CD4-positive, alpha-beta T cell (primary cell): ENCODE measurements at regions of chr2 and their contacts with region 1.

Region 1: GRCh38 chr2:26605195-26605998 is 35.8 kb downstream of the CIB4 start:
- DNase-seq: peak in 10 of 14 experiments; percentile 8 to 73 (median 24)
- ATAC-seq: no peak
- H3K4me3 ChIP-seq: no peak overlapping the region
- H3K4me3 Mint-ChIP-seq: no peak overlapping the region
- H3K27ac ChIP-seq: no peak overlapping the region
- H3K27ac Mint-ChIP-seq: no peak overlapping the region
- H3K4me1 ChIP-seq: peaks cover 17% of the 10 kb centered on the region
- H3K4me1 Mint-ChIP-seq: peaks cover 22% of the 10 kb centered on the region
- H3K27me3 ChIP-seq: peaks cover 3 to 18% of the 10 kb centered on the region in 2 experiments
- H3K27me3 Mint-ChIP-seq: peaks cover 26% of the 10 kb centered on the region
- CTCF ChIP-seq: peak; percentile 66

Region 2: DNA sequence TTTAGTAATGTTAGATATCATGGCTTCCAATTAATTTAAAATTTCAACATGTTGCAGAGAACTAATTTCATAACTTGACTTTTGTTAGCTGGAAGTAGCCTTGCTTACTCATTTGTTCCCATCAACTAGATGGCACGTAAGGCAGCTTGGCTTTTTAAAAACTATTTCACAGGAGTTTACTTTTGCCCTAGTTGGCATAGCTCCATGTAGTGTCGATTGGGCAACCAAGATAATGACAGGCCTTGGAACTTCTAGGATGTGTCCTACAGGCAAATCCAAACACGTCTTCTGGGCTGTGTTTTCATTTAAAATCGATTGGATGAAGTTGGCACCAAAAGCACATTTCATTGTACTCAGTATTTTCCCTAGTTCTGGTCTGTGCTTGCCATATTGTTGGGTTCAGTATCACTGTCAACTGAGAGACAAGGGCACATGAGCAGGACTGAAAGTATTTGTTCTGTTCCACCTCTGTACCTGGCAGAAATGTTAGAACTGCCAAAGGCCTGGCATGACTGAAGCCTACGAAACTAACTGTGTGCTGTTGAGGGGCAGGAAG is 331.3 kb before region 1 on chr2:
- CTCF ChIA-PET with region 1: no interaction called
- POLR2A ChIA-PET with region 1: no interaction called
- intact Hi-C with region 1: no loop called
- DNase-seq: peak in 2 of 14 experiments; percentile 39 to 41
- ATAC-seq: no peak
- H3K4me3 ChIP-seq: no peak overlapping the region
- H3K4me3 Mint-ChIP-seq: no peak overlapping the region
- H3K27ac ChIP-seq: no peak overlapping the region
- H3K27ac Mint-ChIP-seq: no peak overlapping the region
- H3K4me1 ChIP-seq: no peaks in the 10 kb centered on the region
- H3K4me1 Mint-ChIP-seq: no peaks in the 10 kb centered on the region
- H3K27me3 ChIP-seq: no peaks in the 10 kb centered on the region
- H3K27me3 Mint-ChIP-seq: no peaks in the 10 kb centered on the region
- CTCF ChIP-seq: no peak

Region 3: DNA sequence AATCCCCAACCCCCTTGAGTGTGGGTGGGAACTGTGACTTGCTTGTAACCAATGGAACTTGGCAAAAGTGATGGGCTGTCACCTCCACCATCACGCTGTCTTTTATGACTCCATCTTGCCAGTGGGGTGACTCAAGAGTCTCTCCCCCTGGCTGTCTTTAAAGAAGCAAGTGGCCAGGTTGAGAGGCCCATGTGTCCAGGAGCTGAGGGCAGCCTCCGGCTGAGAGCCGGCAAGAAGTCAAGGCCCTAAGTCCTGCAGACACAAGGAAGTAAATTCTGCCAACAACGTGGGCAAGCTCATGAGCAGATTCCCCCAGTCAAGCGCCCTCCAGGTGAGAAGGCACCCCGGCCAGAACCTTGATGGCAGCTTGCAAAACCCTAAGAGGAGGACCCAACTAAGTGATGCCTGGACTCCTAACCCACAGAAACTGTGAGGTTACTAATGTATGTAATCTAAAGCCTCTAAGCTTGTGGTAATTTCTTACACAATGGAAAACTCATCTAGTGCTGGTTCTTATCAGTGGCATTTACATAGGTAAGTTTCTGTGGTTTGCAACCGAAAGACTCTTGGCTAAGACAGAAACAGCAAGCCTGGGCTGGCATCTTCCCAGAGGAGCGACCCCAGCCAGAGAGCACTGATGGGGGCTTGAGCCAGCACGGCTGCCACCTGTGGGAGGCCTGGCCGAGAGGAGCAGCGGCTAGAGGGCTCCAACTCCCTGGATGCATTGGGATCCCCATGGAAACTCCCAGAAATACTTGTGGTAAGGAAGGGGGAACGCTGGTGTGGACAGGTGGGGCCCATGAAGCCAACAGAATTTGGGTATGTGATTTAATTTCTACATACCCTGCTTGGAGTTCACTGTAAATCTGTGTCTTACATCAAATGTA is 13.5 kb before region 1 on chr2:
- CTCF ChIA-PET with region 1: no interaction called
- POLR2A ChIA-PET with region 1: no interaction called
- intact Hi-C with region 1: no loop called
- DNase-seq: peak in 1 of 14 experiments; percentile 22
- ATAC-seq: no peak
- H3K4me3 ChIP-seq: no peak overlapping the region
- H3K4me3 Mint-ChIP-seq: no peak overlapping the region
- H3K27ac ChIP-seq: no peak overlapping the region
- H3K27ac Mint-ChIP-seq: no peak overlapping the region
- H3K4me1 ChIP-seq: no peaks in the 10 kb centered on the region
- H3K4me1 Mint-ChIP-seq: peaks cover 4% of the 10 kb centered on the region
- H3K27me3 ChIP-seq: peaks cover 5 to 21% of the 10 kb centered on the region in 2 experiments
- H3K27me3 Mint-ChIP-seq: peaks cover 45% of the 10 kb centered on the region
- CTCF ChIP-seq: no peak

Region 4: DNA sequence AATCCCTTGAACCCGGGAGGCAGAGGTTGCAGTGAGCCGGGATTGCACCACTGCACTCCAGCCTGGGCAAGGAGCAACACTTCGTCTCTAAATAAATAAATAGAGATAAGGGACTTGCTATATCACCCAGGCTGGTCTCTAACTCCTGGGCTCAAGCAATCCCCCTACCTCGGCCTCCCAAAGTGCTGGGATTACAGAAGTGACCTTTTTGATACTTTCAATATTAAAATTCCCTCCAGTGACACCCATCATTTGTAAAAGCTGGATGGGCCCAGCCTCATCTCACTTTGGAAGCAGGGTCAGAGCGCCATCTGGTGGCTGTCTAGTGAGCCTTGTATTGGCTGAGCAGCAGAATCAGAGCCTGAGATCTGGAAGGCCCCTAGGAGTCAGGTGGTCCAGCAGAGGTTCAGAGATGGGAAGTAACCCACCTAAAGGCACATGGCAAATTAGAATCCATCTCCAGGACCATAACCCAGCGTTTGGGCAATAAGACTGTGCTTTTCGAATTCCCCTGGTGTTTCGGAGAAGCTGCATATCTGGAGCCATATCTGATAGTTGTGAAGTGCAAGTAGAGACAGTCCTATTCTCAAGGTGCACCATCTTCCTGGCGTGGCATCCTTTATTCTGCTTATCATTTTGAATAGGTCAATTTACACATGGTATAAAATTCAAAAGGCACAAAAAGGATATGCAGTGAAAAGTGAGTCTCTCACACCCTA is 140.4 kb after region 1 on chr2:
- CTCF ChIA-PET with region 1: interaction called, 5 read pairs
- POLR2A ChIA-PET with region 1: no interaction called
- intact Hi-C with region 1: loop called (anchors 1 kb)
- DNase-seq: peak; percentile 61 to 87 (median 72)
- ATAC-seq: peak; percentile 78
- H3K4me3 ChIP-seq: no peak overlapping the region
- H3K4me3 Mint-ChIP-seq: no peak overlapping the region
- H3K27ac ChIP-seq: no peak overlapping the region
- H3K27ac Mint-ChIP-seq: no peak overlapping the region
- H3K4me1 ChIP-seq: no peaks in the 10 kb centered on the region
- H3K4me1 Mint-ChIP-seq: peaks cover 4% of the 10 kb centered on the region
- H3K27me3 ChIP-seq: no peaks in the 10 kb centered on the region
- H3K27me3 Mint-ChIP-seq: no peaks in the 10 kb centered on the region
- CTCF ChIP-seq: peak; percentile 93

Region 5: GRCh38 chr2:26922405-26923188 is 317.2 kb after region 1 on chr2:
- CTCF ChIA-PET with region 1: no interaction called
- POLR2A ChIA-PET with region 1: no interaction called
- intact Hi-C with region 1: loop called in 1 of 2 experiments (anchors 5 kb)
- DNase-seq: peak in 13 of 14 experiments; percentile 10 to 61 (median 22)
- ATAC-seq: peak; percentile 85
- H3K4me3 ChIP-seq: no peak overlapping the region
- H3K4me3 Mint-ChIP-seq: no peak overlapping the region
- H3K27ac ChIP-seq: no peak overlapping the region
- H3K27ac Mint-ChIP-seq: no peak overlapping the region
- H3K4me1 ChIP-seq: peaks cover 6% of the 10 kb centered on the region
- H3K4me1 Mint-ChIP-seq: peaks cover 9% of the 10 kb centered on the region
- H3K27me3 ChIP-seq: peaks cover 3 to 19% of the 10 kb centered on the region in 2 experiments
- H3K27me3 Mint-ChIP-seq: peaks cover 24% of the 10 kb centered on the region
- CTCF ChIP-seq: peak; percentile 42

Region 6: GRCh38 chr2:26942543-26943295 is 337.3 kb after region 1 on chr2:
- CTCF ChIA-PET with region 1: no interaction called
- POLR2A ChIA-PET with region 1: no interaction called
- intact Hi-C with region 1: loop called (anchors 5 kb)
- DNase-seq: peak; percentile 35 to 76 (median 50)
- ATAC-seq: peak; percentile 52
- H3K4me3 ChIP-seq: no peak overlapping the region
- H3K4me3 Mint-ChIP-seq: no peak overlapping the region
- H3K27ac ChIP-seq: no peak overlapping the region
- H3K27ac Mint-ChIP-seq: no peak overlapping the region
- H3K4me1 ChIP-seq: peaks cover 6% of the 10 kb centered on the region
- H3K4me1 Mint-ChIP-seq: no peaks in the 10 kb centered on the region
- H3K27me3 ChIP-seq: no peaks in the 10 kb centered on the region
- H3K27me3 Mint-ChIP-seq: peaks cover 19% of the 10 kb centered on the region
- CTCF ChIP-seq: peak; percentile 91